HCT116 (cell line): ENCODE measurements at regions of chr11 and their contacts with region 1.

Region 1: DNA sequence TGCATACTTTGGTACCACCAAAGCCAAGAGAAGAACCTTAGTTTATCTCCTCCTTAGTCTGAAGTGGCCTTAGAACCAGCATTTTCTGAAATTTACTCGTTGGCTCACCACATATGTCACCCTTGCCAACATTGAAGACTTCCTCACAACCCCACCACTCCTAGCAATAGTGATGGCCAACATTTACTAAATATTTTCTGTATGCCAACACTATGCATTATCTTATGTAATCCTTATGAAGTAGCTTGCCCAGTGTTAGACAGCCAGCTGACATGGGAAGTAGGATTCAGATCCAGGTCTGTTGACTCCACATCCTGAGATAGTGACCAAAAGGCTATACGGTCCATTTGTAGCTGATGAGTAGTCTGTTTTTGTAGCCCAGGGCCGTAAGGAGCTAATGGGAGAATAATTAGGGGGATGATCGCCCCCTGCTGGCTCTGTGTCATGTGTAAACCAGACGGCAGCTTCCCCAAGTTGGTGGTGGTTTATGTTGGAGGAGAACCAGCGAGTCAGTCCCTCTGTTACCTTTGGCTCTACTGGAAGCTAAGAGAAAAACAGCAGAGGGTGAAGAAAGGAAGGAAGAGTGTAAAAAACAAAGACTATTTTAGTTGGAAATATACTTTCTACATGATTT is 120.5 kb upstream of the RASSF10 start:
- DNase-seq: peak; percentile 48
- ATAC-seq: peak; percentile 90
- H3K4me3 ChIP-seq: no peak overlapping the region
- H3K27ac ChIP-seq: no peak overlapping the region
- H3K4me1 ChIP-seq: no peaks in the 10 kb centered on the region
- H3K27me3 ChIP-seq: no peaks in the 10 kb centered on the region
- CTCF ChIP-seq: peak; percentile 67 to 81 (median 80)
- POLR2A ChIP-seq: no peak
- RAD21 ChIP-seq: peak; percentile 91

Region 2: DNA sequence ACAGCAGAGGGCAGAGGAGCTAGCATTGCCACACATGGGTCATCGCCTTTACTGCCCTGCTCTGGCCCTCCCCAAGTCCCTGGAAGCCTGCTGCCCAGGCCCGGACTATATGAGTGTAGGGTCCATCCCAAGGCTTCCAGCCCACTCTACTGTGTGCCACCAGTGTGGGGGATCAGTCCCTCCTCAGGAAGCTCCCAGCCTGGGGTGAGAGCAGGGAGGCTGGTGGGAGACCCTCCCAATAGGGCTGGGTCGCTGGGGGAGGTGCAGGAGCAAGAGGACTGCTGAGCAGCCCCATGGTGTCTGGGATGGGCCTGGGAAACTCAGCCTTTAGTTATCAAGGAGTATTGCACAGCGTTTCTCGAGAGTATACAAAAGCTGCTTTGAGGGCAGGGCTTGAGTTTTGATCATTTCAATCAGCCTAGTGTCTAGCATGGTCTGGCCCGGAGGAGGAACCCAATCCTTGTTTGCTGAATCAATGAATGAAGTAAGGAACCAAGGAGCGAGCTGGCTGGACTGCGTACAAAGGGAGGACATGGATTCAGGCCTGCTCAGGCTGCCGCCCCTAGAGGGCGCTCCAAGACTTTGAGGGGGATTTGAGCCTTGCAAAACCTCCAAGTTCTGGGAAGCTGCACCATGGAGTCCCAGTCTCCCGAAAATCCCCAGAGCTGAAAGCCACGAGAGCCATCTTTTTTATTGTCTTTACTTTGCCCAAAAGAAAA is 600.3 kb before region 1 on chr11:
- CTCF ChIA-PET with region 1: interaction called, 17 read pairs
- POLR2A ChIA-PET with region 1: no interaction called
- RAD21 ChIA-PET with region 1: interaction called in 1 of 2 experiments, 4 read pairs
- intact Hi-C with region 1: no loop called
- DNase-seq: peak; percentile 71
- ATAC-seq: peak; percentile 54
- H3K4me3 ChIP-seq: peak overlapping the region; percentile 20 to 50; a peak in 2 of 4 replicates
- H3K27ac ChIP-seq: peak overlapping the region; percentile 62
- H3K4me1 ChIP-seq: peaks cover 25 to 39% of the 10 kb centered on the region in 2 experiments
- H3K27me3 ChIP-seq: no peaks in the 10 kb centered on the region
- CTCF ChIP-seq: peak; percentile 83 to 96 (median 95)
- POLR2A ChIP-seq: no peak
- RAD21 ChIP-seq: peak; percentile 95

Region 3: DNA sequence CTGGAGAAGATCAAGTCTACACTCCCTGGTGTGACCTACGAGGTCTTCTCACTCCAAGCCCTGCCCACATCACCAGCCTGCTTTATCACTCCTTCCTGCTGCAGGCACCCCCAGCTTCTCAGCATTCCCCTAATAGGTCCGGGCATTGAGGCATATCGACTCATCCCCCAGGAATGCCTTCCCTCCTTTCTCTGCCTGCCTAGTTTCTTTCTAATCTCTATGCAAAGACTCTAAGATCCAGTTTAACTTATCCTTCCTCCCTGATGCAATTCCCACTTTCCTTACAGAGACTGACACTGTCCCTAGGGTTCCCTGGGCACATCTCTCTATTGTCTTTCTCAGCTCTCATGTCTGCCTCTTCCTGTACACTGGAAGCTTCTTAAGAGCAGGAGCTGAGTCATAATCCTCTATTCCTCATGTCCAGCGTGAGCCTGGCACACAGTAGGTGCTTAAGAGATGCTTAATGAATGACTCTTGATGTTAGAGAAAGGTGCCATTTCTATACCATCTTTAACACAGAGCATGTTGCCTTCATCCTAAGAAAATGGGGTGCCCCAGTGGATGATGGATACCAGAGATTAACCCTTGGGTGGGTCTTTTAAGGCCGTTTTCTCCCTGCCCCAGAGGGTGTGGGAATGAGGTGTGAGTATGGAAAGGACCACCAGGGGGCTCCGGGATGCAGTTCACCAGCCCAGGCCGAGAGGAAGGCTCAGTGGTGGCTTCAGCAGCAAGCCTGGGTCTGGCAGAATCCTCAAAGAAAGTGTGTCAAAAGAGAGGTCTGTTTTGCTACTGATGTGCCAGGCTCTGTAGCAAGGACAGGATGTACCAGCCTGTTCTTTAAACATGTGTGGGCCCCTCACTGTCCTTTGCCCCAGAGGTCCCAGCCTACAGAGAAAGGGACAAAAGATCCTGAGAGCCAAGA is 476.6 kb before region 1 on chr11:
- CTCF ChIA-PET with region 1: interaction called, 8 read pairs
- POLR2A ChIA-PET with region 1: no interaction called
- RAD21 ChIA-PET with region 1: interaction called in 1 of 2 experiments, 5 read pairs
- intact Hi-C with region 1: loop called (anchors 1 kb)
- DNase-seq: peak; percentile 56
- ATAC-seq: peak; percentile 96
- H3K4me3 ChIP-seq: peak overlapping the region in 1 of 2 experiments; percentile 39; a peak in 2 of 4 replicates
- H3K27ac ChIP-seq: peak overlapping the region; percentile 6; the same call in 1 of the 2 replicates
- H3K4me1 ChIP-seq: peaks cover 5 to 16% of the 10 kb centered on the region in 2 experiments; a peak in 3 of 4 replicates
- H3K27me3 ChIP-seq: no peaks in the 10 kb centered on the region
- CTCF ChIP-seq: peak; percentile 75 to 90 (median 82); a peak in 5 of 6 replicates
- POLR2A ChIP-seq: no peak
- RAD21 ChIP-seq: peak; percentile 84

Region 4: DNA sequence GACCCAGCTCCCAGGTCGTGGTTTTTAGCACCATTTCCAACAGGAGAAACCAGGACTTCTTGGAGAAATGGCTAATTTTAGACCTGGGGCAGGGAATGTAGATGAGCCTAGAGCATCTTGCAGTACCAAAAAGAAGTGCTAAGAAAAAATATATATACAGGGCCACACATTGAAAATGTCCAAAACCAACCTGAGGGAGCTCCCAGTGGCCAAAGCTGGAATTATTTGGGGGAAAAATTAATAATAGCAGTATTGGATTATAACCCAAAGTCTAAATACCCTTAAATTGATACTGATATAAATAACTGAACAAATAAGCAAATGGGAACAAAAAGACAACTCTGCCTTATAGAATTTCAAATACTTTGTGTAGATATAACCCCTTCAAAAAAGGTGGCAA is 403.3 kb before region 1 on chr11:
- CTCF ChIA-PET with region 1: no interaction called
- POLR2A ChIA-PET with region 1: no interaction called
- RAD21 ChIA-PET with region 1: no interaction called
- intact Hi-C with region 1: no loop called
- DNase-seq: no peak
- ATAC-seq: peak; percentile 49
- H3K4me3 ChIP-seq: no peak overlapping the region
- H3K27ac ChIP-seq: no peak overlapping the region
- H3K4me1 ChIP-seq: no peaks in the 10 kb centered on the region
- H3K27me3 ChIP-seq: no peaks in the 10 kb centered on the region
- CTCF ChIP-seq: peak in 2 of 3 experiments; percentile 34 to 51; a peak in 4 of 6 replicates
- POLR2A ChIP-seq: no peak
- RAD21 ChIP-seq: peak; percentile 43

Region 5: DNA sequence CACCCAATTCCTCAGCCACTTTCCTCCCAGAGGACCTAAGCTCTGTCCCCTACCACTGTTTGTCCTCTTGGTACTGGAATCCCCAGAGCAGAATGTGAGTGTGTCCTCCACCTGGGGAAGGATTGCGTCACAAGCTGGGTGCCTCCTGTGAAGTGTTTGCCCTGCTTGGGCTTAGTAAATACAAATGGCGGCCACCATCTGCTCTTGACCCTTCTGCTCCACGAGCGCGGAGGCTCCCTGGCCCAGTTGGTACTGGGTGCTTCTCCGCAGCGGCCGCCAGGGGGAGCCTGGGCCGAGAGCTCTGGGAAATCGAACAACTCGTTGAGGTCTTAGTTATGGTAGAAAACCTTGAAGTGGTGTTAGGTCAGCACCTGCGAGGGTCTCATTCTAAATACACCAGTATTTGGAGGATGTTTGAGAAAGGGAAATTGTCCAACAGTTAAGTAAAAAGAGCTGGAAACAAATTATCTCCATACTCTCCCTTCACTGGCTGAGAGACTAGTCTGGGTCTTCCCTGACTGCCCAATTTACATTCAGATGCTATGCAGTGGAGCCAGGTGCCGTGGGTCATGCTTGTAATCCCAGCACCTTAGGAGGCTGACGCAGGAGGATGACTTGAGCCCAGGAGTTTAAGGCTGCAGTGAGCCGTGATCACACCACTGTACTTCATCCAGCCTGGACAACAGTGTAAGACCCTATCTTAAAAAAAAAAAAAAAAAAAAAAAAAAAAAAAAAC is 289.1 kb before region 1 on chr11:
- CTCF ChIA-PET with region 1: interaction called, 13 read pairs
- POLR2A ChIA-PET with region 1: no interaction called
- RAD21 ChIA-PET with region 1: interaction called, 4 to 8 read pairs
- intact Hi-C with region 1: loop called (anchors 1 kb)
- DNase-seq: peak; percentile 40
- ATAC-seq: peak; percentile 96
- H3K4me3 ChIP-seq: no peak overlapping the region
- H3K27ac ChIP-seq: no peak overlapping the region
- H3K4me1 ChIP-seq: peaks cover 5 to 14% of the 10 kb centered on the region in 2 experiments; a peak in 2 of 4 replicates
- H3K27me3 ChIP-seq: no peaks in the 10 kb centered on the region
- CTCF ChIP-seq: peak; percentile 76 to 92 (median 92)
- POLR2A ChIP-seq: no peak
- RAD21 ChIP-seq: peak; percentile 84

Region 6: GRCh38 chr11:12673924-12674570 is 214.6 kb before region 1 on chr11 and contains the start of gene TEAD1:
- CTCF ChIA-PET with region 1: interaction called, 3 read pairs
- POLR2A ChIA-PET with region 1: no interaction called
- RAD21 ChIA-PET with region 1: no interaction called
- intact Hi-C with region 1: loop called (anchors 2 kb)
- DNase-seq: peak; percentile 74
- ATAC-seq: peak; percentile 86
- H3K4me3 ChIP-seq: peak within 1 kb of the TSS; percentile 68 to 69
- H3K27ac ChIP-seq: peak within 1 kb of the TSS; percentile 71
- H3K4me1 ChIP-seq: peaks cover 25 to 39% of the 10 kb centered on the region in 2 experiments
- H3K27me3 ChIP-seq: no peaks in the 10 kb centered on the region
- CTCF ChIP-seq: no peak
- POLR2A ChIP-seq: peak; percentile 48
- RAD21 ChIP-seq: peak; percentile 9; the same call in 1 of the 2 replicates
- total RNA-seq, gene TEAD1: 103 TPM

Region 7: DNA sequence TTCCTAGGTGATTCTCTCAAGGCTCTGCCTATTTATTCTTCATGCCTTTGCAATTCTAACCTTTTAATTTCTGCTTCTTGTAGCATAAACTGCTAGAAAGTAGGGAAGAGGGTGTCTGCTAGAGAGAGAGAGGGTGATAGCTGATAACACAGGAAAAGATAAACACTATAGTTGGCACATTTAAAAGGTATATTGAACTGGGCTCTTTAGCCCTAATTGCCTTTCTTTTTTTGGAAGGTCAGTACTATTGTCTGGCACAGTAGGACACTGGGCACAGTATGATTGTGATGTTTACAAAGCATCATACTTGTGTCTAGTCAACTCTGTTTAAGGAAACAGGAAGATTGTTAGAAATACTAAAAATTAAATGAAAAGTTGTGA is 181.2 kb before region 1 on chr11:
- CTCF ChIA-PET with region 1: no interaction called
- POLR2A ChIA-PET with region 1: no interaction called
- RAD21 ChIA-PET with region 1: no interaction called
- intact Hi-C with region 1: no loop called
- DNase-seq: no peak
- ATAC-seq: no peak
- H3K4me3 ChIP-seq: no peak overlapping the region
- H3K27ac ChIP-seq: no peak overlapping the region
- H3K4me1 ChIP-seq: peaks cover 21 to 28% of the 10 kb centered on the region in 2 experiments
- H3K27me3 ChIP-seq: no peaks in the 10 kb centered on the region
- CTCF ChIP-seq: no peak
- POLR2A ChIP-seq: no peak
- RAD21 ChIP-seq: no peak

Region 8: GRCh38 chr11:12813371-12814225 is 75.0 kb before region 1 on chr11:
- CTCF ChIA-PET with region 1: interaction called, 6 read pairs
- POLR2A ChIA-PET with region 1: no interaction called
- RAD21 ChIA-PET with region 1: interaction called in 1 of 2 experiments, 5 read pairs
- intact Hi-C with region 1: loop called (anchors 5 kb)
- DNase-seq: no peak
- ATAC-seq: peak; percentile 72
- H3K4me3 ChIP-seq: no peak overlapping the region; a peak in 1 of 4 replicates
- H3K27ac ChIP-seq: peak overlapping the region; percentile 70
- H3K4me1 ChIP-seq: peaks cover 72 to 87% of the 10 kb centered on the region in 2 experiments
- H3K27me3 ChIP-seq: no peaks in the 10 kb centered on the region
- CTCF ChIP-seq: peak in 2 of 3 experiments; percentile 27 to 28; a peak in 3 of 6 replicates
- POLR2A ChIP-seq: no peak
- RAD21 ChIP-seq: peak; percentile 64